Right ventricle myocardium inferior (tissue), 1 donor: ENCODE measurements at regions of chr1 and their contacts with region 1.

Region 1: GRCh38 chr1:233790662-233791375 is 113.7 kb upstream of the SLC35F3 start:
- DNase-seq: no peak
- ATAC-seq: peak; percentile 79

Region 2: DNA sequence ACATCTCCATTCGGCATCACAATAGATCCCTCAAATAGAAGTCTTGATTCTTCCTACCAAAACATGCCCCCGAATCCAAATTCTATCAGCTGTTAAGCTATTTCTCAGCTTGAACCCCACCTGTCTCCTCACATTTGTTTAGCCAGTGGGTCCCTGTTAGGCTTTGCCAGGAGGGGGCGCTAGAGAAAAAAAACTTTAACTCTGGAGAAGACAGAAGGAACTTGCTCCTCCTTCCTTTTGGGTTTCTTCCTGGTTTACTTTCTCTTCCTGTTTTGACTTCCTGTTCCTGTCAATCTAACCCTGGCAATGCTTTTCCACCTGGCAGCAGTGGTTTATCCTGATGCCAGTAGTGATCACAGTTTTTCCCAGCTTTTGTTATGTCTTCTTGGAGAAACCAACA is 272.5 kb before region 1 on chr1:
- intact Hi-C with region 1: loop called (anchors 1 kb)
- DNase-seq: no peak
- ATAC-seq: no peak

Region 3: DNA sequence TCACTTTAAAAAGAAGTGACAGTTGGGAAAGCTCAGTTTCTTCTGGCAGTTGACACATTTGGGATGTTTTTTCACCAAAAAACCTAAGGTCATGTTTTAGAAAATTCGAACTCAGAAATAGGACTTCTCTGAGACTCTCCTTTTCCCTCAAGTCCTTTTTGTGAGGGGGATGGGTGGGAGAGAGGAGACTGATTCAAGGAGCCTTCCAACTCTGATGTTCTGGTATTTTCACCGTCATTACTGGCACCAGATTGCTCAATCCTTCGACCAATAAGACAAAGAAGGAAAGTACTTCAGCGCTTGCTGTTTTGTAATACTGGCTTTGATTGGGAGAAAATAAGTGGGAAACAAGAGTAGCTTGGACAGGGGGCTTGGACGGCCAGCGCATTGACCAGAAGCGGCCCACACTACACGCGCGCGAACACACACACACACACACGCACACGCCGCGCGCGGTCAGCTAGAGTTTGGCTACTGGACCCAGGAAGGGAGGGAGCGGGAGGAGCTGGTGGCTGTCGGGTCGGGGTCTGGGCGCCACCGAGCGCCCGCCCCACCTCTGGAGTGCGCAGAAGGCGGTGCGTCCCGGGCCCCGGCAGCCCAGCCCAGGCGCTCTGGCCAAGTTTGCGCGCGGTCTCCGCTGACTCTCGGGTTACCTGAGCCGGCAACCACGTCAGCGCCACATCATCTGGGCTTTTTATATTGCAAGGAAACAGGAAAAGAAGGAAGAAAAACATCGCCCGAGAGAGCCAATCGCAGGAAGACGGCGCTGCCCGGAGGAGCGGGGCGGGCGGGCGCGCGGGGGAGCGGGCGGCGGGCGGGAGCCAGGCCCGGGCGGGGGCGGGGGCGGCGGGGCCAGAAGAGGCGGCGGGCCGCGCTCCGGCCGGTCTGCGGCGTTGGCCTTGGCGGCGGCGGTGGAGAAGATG is 177.3 kb before region 1 on chr1 and contains the start of gene KCNK1:
- intact Hi-C with region 1: loop called (anchors 10 kb)
- DNase-seq: peak; percentile 69
- ATAC-seq: peak; percentile 89
- total RNA-seq, gene KCNK1: 25.4 TPM